ENCODE measurements at regions of chr2 and their contacts with region 1.

Region 1: GRCh38 chr2:28810384-28811285 is at the start of gene SPDYA:
- DNase-seq: peak; percentile 76
- H3K4me3 Mint-ChIP-seq: peak within 1 kb of the TSS; percentile 72
- H3K27ac Mint-ChIP-seq: no peak within 1 kb of the TSS
- H3K4me1 Mint-ChIP-seq: peaks cover 9% of the 10 kb centered on the region
- H3K27me3 Mint-ChIP-seq: peaks cover 3% of the 10 kb centered on the region
- total RNA-seq, gene SPDYA: 1.5 and 1.8 TPM in 2 replicates

Region 2: DNA sequence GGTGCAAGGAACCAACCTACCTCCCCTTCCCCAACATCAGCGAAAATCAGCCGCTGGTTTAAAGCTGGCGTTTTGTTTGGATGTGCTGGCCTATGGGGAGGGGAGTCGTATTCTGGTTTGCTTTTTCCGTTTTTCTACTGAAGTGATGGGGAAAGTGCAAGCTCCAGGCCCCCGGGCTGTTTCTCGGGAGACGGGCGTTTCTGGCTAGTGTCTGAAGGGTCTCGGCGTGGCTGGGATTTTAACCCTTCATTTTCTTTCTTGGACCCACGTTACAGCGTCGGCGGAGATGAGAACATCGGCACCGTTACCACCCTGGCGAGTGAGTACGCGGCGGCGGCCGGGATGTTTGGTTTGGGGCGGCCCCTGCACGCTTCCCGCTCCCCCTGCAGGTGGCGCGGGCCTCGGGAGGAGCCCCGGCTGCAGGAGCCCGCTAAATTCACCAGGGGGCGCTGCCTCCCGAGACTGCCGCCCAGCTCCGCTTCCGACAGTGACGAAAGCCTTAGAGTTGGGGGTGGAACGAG is 244.1 kb before region 1 on chr2:
- intact Hi-C with region 1: loop called (anchors 2 kb)
- DNase-seq: peak; percentile 85
- H3K4me3 Mint-ChIP-seq: peak overlapping the region; percentile 87
- H3K27ac Mint-ChIP-seq: peak overlapping the region; percentile 82
- H3K4me1 Mint-ChIP-seq: peaks cover 19% of the 10 kb centered on the region
- H3K27me3 Mint-ChIP-seq: peaks cover 1% of the 10 kb centered on the region

Region 3: GRCh38 chr2:28610583-28611201 is 199.9 kb before region 1 on chr2:
- intact Hi-C with region 1: loop called (anchors 1 kb)
- DNase-seq: no peak
- H3K4me3 Mint-ChIP-seq: no peak overlapping the region
- H3K27ac Mint-ChIP-seq: peak overlapping the region; percentile 10
- H3K4me1 Mint-ChIP-seq: peaks cover 21% of the 10 kb centered on the region
- H3K27me3 Mint-ChIP-seq: no peaks in the 10 kb centered on the region

Region 4: DNA sequence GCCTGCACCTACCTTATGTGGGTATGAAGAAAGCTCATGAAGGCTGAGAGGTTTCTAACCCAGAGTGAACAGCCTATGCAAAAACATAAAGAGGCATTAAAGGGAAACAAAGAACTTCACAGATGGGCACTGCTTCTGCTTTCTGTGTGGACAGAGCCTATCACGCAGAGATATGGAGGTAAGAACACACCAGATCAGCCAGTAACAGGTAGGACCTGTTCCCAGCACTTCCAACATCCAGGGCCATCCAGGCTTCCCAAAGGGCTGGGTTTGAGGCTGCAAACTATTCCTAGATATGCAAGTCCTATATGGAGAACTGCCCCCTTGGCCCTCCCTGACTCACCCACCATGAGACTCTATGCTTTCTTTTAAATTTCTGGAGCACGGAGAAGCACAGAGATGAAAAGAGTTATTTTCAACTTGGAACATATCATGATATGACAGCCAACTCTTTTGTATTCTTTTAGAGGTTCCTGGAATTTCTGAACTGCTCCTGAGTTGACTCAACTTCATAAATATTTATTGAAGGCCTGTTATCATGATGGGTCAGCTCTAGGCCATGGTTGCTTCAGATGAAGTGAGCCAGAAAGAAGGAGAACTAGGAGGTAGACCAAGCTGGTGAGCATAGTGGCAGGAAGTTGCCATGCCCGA is 136.4 kb before region 1 on chr2:
- intact Hi-C with region 1: no loop called
- DNase-seq: no peak
- H3K4me3 Mint-ChIP-seq: no peak overlapping the region
- H3K27ac Mint-ChIP-seq: no peak overlapping the region
- H3K4me1 Mint-ChIP-seq: peaks cover 23% of the 10 kb centered on the region
- H3K27me3 Mint-ChIP-seq: no peaks in the 10 kb centered on the region

Region 5: DNA sequence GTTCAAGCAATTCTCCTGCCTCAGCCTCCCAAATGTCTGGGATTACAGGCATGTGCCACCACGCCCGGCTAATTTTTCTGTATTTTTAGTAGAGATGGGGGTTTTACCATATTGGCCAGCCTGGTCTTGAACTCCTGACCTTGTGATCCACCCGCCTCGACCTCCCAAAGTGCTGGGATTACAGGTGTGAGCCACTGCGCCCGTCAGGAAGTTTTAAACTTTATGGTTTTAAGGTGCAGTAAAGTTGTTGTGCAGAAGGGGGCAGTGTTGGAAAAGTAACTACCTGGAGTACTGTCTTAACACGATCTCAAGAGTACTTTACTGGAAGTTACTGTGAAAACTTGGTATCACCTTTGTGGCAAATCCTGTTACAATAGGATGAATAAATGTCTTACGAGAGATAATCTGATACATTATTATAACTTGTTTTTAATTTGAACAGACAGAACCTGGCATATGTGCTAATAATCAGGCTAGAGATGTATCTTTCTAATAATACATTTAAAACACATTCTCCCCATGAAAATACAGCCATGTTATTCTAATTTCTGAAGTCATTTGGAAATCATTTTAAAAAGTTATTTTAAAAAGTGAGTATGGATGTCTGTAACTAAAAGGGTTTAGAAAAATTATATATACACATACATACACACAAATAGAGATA is 10.8 kb after region 1 on chr2:
- intact Hi-C with region 1: no loop called
- DNase-seq: peak; percentile 33
- H3K4me3 Mint-ChIP-seq: no peak overlapping the region
- H3K27ac Mint-ChIP-seq: no peak overlapping the region
- H3K4me1 Mint-ChIP-seq: peaks cover 6% of the 10 kb centered on the region
- H3K27me3 Mint-ChIP-seq: peaks cover 2% of the 10 kb centered on the region

Region 6: DNA sequence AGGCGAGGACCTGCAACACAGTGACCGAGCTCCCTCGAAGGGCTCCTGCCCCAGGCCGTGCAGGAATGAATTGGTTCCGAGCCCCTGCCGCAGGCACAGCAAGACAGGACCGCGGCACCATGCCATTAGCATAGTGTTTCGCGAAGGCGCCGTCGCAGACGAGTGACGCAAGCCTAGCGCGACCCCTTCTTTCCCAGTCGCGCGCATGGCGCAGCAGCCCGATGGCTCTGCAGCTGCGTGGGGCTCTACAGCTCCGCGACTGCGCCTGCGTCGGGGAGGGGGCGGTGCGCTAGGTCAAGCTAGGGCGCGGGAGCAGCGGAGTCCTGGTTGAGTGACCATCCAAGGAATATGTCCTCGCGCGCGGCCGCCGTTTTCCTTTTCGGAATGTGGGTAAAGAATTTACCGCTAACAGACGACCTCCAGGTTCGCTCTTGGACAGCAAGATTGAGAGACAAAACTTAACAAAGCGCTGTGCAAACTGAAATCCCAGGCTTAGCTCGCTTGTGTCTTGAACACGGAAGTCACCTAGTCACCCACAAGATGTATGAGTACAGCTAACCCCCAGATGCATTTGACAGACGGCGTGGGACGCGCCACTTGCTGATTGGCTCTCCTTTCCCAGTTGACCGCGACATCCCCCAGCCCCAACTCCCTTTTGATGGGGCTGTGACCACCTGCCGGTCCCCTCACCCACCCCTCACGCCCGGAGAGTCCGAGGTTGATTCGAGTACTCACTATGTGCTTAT is 59.7 kb after region 1 on chr2 and contains the start of gene TRMT61B:
- intact Hi-C with region 1: loop called (anchors 2 kb)
- DNase-seq: peak; percentile 96
- H3K4me3 Mint-ChIP-seq: peak within 1 kb of the TSS; percentile 96
- H3K27ac Mint-ChIP-seq: peak within 1 kb of the TSS; percentile 91
- H3K4me1 Mint-ChIP-seq: peaks cover 19% of the 10 kb centered on the region
- H3K27me3 Mint-ChIP-seq: peaks cover 5% of the 10 kb centered on the region
- total RNA-seq, gene TRMT61B: 15.1 and 17.3 TPM in 2 replicates

Region 7: DNA sequence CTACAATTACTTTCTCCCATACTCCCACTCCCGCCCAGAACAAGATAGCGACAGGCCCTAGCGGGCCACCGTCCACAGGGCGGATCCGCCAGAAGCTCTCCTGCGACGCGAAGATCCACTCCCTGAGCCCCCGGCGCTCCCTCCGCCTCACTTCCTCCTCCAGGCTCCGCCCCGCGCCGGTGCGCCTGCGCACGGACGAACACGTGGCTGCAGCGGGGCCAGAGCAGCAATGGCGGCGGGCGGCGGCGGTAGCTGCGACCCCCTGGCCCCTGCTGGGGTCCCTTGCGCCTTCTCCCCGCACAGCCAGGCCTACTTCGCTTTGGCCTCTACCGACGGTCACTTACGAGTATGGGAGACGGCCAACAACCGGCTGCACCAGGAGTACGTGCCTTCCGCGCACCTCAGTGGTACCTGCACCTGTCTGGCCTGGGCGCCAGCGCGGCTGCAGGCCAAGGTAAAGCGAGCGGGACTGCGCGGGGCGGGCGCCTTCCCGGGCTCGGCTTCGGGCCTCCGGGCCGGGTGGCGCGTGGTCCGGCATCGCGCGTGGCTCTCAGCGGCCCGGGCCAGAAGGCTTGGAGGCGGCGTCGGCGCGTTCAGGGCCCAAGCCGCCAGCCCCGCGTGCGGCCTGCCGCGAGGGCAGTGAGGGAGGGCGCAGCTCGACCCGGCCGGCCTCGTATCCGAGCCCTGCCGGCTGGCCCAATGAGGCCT is 84.0 kb after region 1 on chr2 and contains the start of gene WDR43:
- intact Hi-C with region 1: loop called (anchors 5 kb)
- DNase-seq: peak; percentile 97
- H3K4me3 Mint-ChIP-seq: peak within 1 kb of the TSS; percentile 99
- H3K27ac Mint-ChIP-seq: peak within 1 kb of the TSS; percentile 95
- H3K4me1 Mint-ChIP-seq: peaks cover 38% of the 10 kb centered on the region
- H3K27me3 Mint-ChIP-seq: peaks cover 7% of the 10 kb centered on the region
- total RNA-seq, gene WDR43: 117 and 128 TPM in 2 replicates